Activated CD8-positive, alpha-beta memory T cell treated with anti-CD3 and anti-CD28 coated beads, Interleukin-2, amount 10 ng/mL, durations not matched to agents 7 days and 5 days (primary cell): ENCODE measurements at regions of chr5 and their contacts with region 1.

Region 1: DNA sequence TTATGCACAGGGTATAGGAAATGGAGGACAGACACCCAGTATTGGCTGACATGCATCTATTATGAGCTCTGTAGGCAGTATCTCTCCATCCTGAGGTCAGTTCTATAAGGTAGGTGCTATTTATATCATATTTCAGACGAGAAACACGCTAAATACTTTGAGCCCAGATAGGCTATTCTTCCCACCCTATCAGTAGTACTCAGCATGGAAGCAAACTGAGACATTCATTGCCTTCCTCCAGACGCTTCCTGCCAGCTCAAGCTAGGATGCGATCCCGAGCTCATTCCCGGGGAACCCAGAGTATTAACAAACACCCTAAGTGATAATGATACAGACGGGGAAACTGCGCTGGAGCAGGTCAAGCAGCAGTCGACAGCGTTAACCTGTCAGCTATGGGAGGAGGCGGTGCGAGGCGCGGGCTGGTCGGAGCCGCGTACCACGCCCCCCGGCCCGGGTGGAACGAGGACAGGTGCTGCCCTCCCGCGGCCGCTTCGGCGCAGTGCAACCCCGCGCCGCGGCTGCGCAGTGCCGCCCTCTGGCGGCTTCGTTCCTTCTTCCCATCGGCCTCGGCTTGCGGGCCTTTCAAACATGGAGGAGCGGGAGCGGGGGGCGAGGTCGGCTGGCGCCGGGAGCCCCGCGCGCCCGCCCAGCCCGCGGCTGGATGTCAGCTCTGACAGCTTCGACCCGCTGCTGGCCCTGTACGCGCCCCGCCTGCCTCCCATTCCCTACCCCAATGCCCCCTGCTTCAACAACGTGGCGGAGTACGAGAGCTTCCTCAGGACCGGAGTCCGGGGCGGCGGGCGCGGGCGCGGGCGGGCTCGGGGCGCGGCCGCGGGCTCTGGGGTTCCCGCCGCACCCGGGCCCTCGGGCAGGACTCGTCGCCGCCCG is at the start of gene LSM11:
- DNase-seq: peak; percentile 92
- ATAC-seq: peak; percentile 94
- H3K4me3 Mint-ChIP-seq: peak within 1 kb of the TSS; percentile 83
- H3K27ac Mint-ChIP-seq: peak within 1 kb of the TSS; percentile 83
- H3K4me1 Mint-ChIP-seq: peaks cover 36% of the 10 kb centered on the region
- H3K27me3 Mint-ChIP-seq: no peaks in the 10 kb centered on the region
- total RNA-seq, gene LSM11: 5.5 to 7.2 TPM

Region 2: DNA sequence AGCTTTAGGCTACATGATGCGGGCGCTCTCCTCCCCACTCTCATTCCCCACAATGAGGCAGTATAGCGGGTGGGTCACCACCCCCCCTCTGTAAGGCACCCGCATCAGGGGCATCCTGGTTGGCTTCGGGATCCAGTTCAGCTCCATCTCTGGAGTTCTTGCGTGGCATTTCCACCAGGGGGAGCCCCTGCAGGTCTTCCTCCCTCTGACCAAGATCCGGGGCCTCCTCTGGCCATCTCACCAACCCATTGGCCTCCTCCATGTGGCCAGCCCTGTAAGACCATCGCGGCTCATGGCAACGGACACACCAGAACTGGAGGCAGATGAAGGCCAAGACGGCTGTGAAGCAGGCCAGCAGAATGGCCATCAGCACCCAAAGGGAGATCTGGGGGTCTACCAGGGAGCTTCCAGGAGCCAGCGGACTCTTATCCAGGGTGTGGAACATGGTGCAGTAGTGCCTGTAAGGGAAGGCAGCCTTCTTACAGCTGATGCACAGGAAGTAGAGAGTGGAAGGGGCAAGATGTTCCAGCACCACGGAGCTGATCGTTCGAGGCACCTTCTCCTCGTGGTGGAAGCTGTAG is 400.5 kb before region 1 on chr5:
- CTCF ChIA-PET with region 1: interaction called, 33 read pairs
- DNase-seq: peak; percentile 52
- ATAC-seq: peak; percentile 34
- H3K4me3 Mint-ChIP-seq: no peak overlapping the region
- H3K27ac Mint-ChIP-seq: no peak overlapping the region
- H3K4me1 Mint-ChIP-seq: peaks cover 52% of the 10 kb centered on the region
- H3K27me3 Mint-ChIP-seq: no peaks in the 10 kb centered on the region

Region 3: DNA sequence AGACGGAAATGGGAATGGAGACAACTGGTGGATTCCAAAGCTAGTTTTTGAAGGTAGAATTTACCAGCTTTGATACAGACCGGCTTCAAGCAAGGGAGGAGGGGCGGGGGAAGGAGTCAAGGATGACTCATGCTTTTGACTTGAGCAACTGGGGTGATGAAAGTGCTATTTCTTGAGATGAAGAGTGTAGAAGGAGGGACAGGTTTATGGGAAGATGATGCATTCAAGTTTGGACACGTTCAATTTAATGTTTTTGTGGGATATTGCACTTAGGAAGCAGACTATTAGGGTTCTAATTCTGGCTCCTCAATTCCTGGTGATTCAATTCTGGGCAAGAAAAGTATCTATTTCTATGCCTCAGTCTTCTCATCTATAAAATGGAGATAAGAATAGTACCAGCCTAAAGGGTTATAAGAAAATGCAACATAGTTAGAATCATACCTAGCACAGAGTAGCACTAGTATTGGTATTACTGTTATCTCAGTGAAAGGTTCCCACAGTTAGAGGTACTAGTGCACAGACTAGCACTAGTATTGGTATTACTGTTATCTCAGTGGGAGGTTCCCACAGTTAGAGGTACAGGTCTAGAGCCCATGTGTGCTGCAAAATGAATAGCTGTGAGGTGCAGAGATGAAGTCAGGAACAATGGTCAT is 278.8 kb before region 1 on chr5:
- CTCF ChIA-PET with region 1: interaction called, 19 read pairs
- DNase-seq: peak; percentile 78
- ATAC-seq: peak; percentile 83
- H3K4me3 Mint-ChIP-seq: peak overlapping the region; percentile 0
- H3K27ac Mint-ChIP-seq: peak overlapping the region; percentile 47
- H3K4me1 Mint-ChIP-seq: peaks cover 32% of the 10 kb centered on the region
- H3K27me3 Mint-ChIP-seq: peaks cover 18% of the 10 kb centered on the region

Region 4: DNA sequence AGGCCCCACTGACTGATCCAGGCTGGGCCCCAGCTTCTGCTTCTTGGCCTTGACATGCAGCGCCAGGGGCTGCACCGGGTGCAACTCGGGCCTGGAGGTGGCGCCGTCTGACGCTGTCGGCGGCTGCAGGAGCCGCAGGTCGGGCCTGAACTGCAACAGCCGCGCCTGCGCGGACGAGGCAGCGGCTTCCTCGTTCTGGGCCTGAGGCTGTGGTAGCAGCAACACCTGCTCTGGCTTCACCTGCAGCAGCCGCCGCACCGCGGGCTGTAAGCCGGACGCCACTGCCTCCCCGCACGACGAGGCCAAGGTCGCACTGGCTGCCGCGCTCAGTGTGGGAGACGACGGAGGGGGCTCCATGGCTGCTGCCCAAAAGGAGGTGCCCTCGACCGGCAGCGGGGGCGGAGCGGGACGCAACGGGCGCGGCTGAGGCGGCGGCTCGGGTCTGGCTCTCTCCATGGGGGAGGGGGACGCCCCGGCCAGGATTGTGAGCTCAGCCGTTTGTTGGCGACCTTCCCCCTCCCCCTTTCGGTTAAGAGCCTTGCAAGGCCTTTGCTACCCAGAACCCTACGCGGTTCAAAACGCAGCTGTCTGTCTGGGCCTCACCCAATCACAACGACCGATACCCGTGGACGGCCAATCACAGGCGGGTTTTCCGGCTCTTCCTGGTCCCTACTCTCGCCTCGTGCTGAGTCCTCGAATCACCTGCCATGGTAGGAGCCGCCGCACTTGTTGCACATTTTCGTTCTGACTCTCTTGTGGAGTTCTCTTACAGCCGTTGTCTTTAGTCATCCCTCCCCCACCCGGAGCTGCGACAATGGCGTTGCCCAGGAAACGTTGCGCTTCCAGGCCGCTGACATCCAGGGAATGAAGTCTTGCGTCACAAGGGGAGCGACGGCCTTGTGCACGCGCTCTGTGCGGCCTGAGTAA is 91.5 kb before region 1 on chr5 and contains the start of gene SOX30:
- CTCF ChIA-PET with region 1: no interaction called
- DNase-seq: peak; percentile 88
- ATAC-seq: peak; percentile 98
- H3K4me3 Mint-ChIP-seq: peak within 1 kb of the TSS; percentile 66
- H3K27ac Mint-ChIP-seq: peak within 1 kb of the TSS; percentile 77
- H3K4me1 Mint-ChIP-seq: peaks cover 14% of the 10 kb centered on the region
- H3K27me3 Mint-ChIP-seq: peaks cover 5% of the 10 kb centered on the region
- total RNA-seq, gene SOX30: 0.09 TPM in 1 of 2 experiments, not detected in the other

Region 5: GRCh38 chr5:157670662-157671591 is 72.5 kb before region 1 on chr5 and contains the start of gene C5orf52:
- CTCF ChIA-PET with region 1: interaction called, 56 read pairs
- DNase-seq: peak; percentile 44
- ATAC-seq: peak; percentile 64
- H3K4me3 Mint-ChIP-seq: peak within 1 kb of the TSS; percentile 88
- H3K27ac Mint-ChIP-seq: peak within 1 kb of the TSS; percentile 61
- H3K4me1 Mint-ChIP-seq: peaks cover 22% of the 10 kb centered on the region
- H3K27me3 Mint-ChIP-seq: peaks cover 32% of the 10 kb centered on the region
- total RNA-seq, gene C5orf52: not detected

Region 6: GRCh38 chr5:157756122-157756521 is 12.7 kb after region 1 on chr5:
- CTCF ChIA-PET with region 1: interaction called, 31 read pairs
- DNase-seq: no peak
- ATAC-seq: no peak
- H3K4me3 Mint-ChIP-seq: no peak overlapping the region
- H3K27ac Mint-ChIP-seq: no peak overlapping the region
- H3K4me1 Mint-ChIP-seq: peaks cover 10% of the 10 kb centered on the region
- H3K27me3 Mint-ChIP-seq: no peaks in the 10 kb centered on the region

Region 7: DNA sequence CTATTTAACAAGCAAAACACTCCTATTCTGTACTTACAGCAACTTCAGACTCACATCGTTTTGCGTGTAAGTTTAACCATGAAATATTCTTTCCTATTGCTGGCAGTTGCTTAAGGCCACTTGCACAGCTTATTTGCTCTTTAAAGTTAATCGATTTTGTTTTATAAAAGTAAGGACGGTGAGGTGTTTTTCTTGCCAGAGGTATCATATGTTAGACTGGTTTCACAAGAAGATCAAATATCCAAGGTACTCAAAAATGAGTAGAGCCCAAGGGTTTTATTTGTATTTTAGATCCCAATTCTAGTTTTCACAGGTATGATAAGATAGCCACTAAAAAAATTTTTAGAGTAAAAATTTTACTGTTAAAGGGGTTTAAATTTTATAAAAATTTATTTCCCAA is 99.4 kb after region 1 on chr5:
- CTCF ChIA-PET with region 1: no interaction called
- DNase-seq: no peak
- ATAC-seq: no peak
- H3K4me3 Mint-ChIP-seq: no peak overlapping the region
- H3K27ac Mint-ChIP-seq: no peak overlapping the region
- H3K4me1 Mint-ChIP-seq: no peaks in the 10 kb centered on the region
- H3K27me3 Mint-ChIP-seq: no peaks in the 10 kb centered on the region